ENCODE measurements at regions of chr7 and their contacts with region 1.

Region 1: GRCh38 chr7:47195641-47196040 is 386.3 kb downstream of the TNS3 start:
- DNase-seq: peak in 1 of 2 experiments; percentile 29
- H3K4me3 ChIP-seq: no peak overlapping the region
- H3K4me3 Mint-ChIP-seq: no peak overlapping the region
- H3K27ac Mint-ChIP-seq: no peak overlapping the region
- H3K4me1 ChIP-seq: peaks cover 6% of the 10 kb centered on the region; the same call in 1 of the 2 replicates
- H3K4me1 Mint-ChIP-seq: peaks cover 16% of the 10 kb centered on the region
- H3K27me3 ChIP-seq: no peaks in the 10 kb centered on the region
- H3K27me3 Mint-ChIP-seq: no peaks in the 10 kb centered on the region
- CTCF ChIP-seq: peak; percentile 11 to 18

Region 2: GRCh38 chr7:47225387-47226131 is 29.9 kb after region 1 on chr7:
- CTCF ChIA-PET with region 1: no interaction called
- POLR2A ChIA-PET with region 1: no interaction called
- intact Hi-C with region 1: no loop called
- DNase-seq: no peak
- H3K4me3 ChIP-seq: no peak overlapping the region
- H3K4me3 Mint-ChIP-seq: no peak overlapping the region
- H3K27ac Mint-ChIP-seq: no peak overlapping the region
- H3K4me1 ChIP-seq: no peaks in the 10 kb centered on the region
- H3K4me1 Mint-ChIP-seq: no peaks in the 10 kb centered on the region
- H3K27me3 ChIP-seq: no peaks in the 10 kb centered on the region
- H3K27me3 Mint-ChIP-seq: peaks cover 10% of the 10 kb centered on the region
- CTCF ChIP-seq: no peak

Region 3: GRCh38 chr7:47254081-47255006 is 58.7 kb after region 1 on chr7:
- CTCF ChIA-PET with region 1: no interaction called
- POLR2A ChIA-PET with region 1: interaction called, 3 read pairs
- intact Hi-C with region 1: loop called (anchors 5 kb)
- DNase-seq: peak; percentile 74 to 86
- H3K4me3 ChIP-seq: peak overlapping the region; percentile 52
- H3K4me3 Mint-ChIP-seq: peak overlapping the region; percentile 68
- H3K27ac Mint-ChIP-seq: no peak overlapping the region
- H3K4me1 ChIP-seq: no peaks in the 10 kb centered on the region; the same call in 1 of the 2 replicates
- H3K4me1 Mint-ChIP-seq: no peaks in the 10 kb centered on the region
- H3K27me3 ChIP-seq: no peaks in the 10 kb centered on the region
- H3K27me3 Mint-ChIP-seq: peaks cover 7% of the 10 kb centered on the region
- CTCF ChIP-seq: peak; percentile 53 to 94